ENCODE measurements at regions of chr12 and their contacts with region 1.

Region 1: DNA sequence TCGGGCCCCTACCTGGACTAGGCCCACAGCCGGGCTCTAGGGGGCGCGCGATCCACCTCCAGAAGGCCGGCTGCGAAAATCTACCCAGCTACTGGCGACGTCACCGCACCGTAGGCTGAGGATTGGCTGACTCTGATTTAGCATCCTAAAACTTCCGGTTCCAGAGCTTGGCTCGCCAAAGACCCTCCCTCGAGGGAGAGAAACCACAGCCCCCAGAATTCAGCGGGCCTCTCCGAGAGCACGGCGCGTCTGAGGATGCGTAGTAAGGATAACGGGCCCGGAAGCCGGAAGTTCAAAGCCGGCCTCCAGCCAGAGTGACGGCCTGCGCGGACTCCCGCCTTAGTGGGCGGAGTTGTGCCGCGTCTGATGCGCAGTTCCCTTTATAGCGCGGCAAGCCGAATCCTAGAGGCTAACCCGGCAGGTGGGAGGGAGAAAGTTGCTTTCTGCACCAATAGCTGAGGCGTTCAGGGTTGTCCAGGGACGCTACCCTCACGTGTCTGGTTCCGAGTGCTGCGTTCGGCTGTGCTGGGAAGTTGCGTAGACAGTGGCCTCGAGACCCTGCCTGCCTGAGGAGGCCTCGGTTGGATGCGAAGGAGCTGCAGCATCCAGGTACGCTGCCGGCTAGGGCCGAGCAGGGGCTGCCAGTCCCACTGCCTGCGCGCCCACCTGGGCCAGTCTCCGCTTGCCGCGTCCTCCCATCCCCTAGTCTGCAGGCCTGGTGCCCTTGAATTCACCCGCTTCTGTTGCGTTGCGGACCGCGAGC is at the start of gene COX14:
- DNase-seq: peak; percentile 98 to 99
- ATAC-seq: peak; percentile 88 to 95 (median 92)
- H3K4me3 ChIP-seq: peak within 1 kb of the TSS; percentile 70 to 100 (median 96)
- H3K27ac ChIP-seq: peak within 1 kb of the TSS; percentile 83 to 98 (median 96)
- H3K4me1 ChIP-seq: peaks cover 16 to 68% (median 53%) of the 10 kb centered on the region in 9 donors
- H3K27me3 ChIP-seq: no peaks in the 10 kb centered on the region
- CTCF ChIP-seq: peak; percentile 84 to 100 (median 92)
- total RNA-seq, gene COX14: 144 to 239 (median 170) TPM

Region 2: GRCh38 chr12:49776413-49776812 is 335.5 kb before region 1 on chr12:
- intact Hi-C with region 1: no loop called
- DNase-seq: peak; percentile 51 to 59
- ATAC-seq: peak; percentile 73 to 94 (median 88)
- H3K4me3 ChIP-seq: no peak overlapping the region
- H3K27ac ChIP-seq: no peak overlapping the region
- H3K4me1 ChIP-seq: peaks cover 0 to 10% (median 5%) of the 10 kb centered on the region in 9 donors
- H3K27me3 ChIP-seq: no peaks in the 10 kb centered on the region
- CTCF ChIP-seq: peak; percentile 60 to 86 (median 80)

Region 3: DNA sequence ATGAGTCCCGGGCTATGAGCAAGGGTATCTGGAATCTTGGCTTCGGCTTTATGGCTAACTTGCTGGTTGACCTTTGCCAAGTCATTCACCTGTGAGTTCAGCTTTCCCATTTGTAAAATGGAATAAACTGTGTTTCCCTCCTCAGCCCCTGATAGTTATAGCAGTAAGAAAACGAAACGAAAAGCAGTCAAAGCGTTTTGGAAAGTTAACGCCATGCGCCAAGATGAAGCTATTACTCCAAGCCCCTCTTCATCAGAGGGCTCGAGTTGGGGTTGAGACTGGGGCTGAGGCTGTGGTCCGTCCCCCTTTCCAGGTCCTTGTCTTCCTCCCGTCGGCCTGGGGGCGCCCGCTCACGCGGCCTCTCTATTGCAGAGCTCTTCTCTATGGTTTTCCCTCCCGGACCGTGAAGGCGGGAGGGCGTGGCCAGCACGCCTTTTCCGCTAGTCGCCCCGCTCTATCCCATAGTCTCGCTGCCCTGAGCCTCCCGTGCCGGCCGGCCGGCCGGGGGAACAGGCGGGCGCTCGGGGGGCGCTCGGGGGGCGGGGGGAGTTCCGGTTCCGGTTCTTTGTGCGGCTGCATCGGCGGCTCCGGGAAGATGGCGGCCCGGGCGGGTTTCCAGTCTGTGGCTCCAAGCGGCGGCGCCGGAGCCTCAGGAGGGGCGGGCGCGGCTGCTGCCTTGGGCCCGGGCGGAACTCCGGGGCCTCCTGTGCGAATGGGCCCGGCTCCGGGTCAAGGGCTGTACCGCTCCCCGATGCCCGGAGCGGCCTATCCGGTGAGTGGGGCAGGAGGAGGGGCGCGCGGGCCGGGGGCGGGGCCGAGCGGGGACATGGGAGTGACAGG is 26.9 kb before region 1 on chr12 and contains the start of gene SMARCD1:
- intact Hi-C with region 1: loop called in 2 of 10 experiments (anchors 2 kb)
- DNase-seq: peak; percentile 93
- ATAC-seq: peak; percentile 95 to 98 (median 96)
- H3K4me3 ChIP-seq: peak within 1 kb of the TSS; percentile 73 to 99 (median 90)
- H3K27ac ChIP-seq: peak within 1 kb of the TSS; percentile 95 to 100 (median 98)
- H3K4me1 ChIP-seq: peaks cover 0 to 34% (median 13%) of the 10 kb centered on the region in 9 donors
- H3K27me3 ChIP-seq: no peaks in the 10 kb centered on the region
- CTCF ChIP-seq: peak in 8 of 9 donors; percentile 12 to 78 (median 59)
- total RNA-seq, gene SMARCD1: 13.3 to 24.0 (median 17.4) TPM

Region 4: DNA sequence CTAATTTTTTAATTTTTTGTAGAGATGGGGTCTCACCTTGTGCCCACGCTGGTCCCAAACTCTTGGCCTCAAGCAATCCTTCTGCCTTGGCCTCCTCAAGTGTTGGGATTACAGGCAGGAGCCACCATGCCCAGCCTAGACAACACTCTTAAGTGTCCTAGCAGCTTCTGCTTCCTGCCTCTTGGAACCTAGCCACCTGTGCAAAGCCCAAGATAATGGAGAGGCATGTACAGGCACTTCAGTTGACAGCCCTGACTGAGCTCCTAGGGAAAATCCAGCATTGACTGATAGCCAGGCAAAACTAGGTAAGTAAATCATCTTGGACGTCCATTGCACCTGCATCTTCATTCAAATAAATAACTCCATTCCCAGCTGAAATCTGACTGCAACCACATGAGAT is 15.7 kb after region 1 on chr12:
- intact Hi-C with region 1: no loop called
- DNase-seq: no peak
- ATAC-seq: peak in 5 of 8 donors; percentile 41 to 78 (median 69)
- H3K4me3 ChIP-seq: no peak overlapping the region
- H3K27ac ChIP-seq: no peak overlapping the region
- H3K4me1 ChIP-seq: peaks cover 0 to 45% (median 15%) of the 10 kb centered on the region in 9 donors
- H3K27me3 ChIP-seq: no peaks in the 10 kb centered on the region
- CTCF ChIP-seq: no peak

Region 5: DNA sequence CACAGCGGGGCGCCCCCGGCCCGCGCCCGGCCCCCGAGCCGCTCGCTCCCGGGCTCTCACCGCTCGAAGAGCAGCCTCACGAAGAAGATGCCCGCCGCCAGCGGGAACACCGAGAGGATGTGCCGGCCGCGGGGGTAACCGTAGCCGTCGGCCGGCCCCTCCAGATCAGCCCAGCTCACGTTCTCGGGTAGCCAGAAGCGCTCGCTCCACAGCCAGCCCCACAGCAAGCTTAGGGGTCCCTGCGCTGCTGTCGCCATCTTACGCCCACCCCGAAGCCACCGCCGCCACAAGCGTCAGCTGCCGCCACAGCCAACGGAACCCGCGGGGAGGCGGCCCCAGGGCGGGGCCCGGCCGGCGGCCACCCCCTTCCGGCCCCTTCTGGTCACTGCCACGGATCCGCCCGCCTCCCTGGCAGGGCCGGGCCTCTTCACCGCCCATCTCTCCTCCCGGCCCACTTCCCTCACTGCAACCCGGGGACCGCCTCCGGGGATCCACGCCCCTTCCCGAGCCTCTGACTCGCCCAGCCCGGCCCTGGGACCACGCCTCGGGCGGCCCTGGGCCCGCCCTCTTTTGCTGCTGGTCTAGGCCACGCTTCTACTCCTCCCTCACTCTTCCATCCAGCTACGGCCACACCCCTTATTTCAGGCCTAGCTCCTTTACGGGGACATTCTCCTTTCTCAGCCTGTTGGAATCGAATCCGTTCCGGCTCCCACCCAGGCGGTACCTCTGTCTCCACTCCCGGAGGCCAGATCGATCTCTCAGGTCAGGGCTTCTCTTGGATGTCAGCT is 55.4 kb after region 1 on chr12 and contains the start of gene CERS5:
- intact Hi-C with region 1: loop called in 6 of 10 experiments (anchors 2 to 10 kb)
- DNase-seq: peak; percentile 98 to 99
- ATAC-seq: peak; percentile 98 to 100 (median 99)
- H3K4me3 ChIP-seq: peak within 1 kb of the TSS; percentile 57 to 100 (median 94)
- H3K27ac ChIP-seq: peak within 1 kb of the TSS; percentile 60 to 99 (median 94)
- H3K4me1 ChIP-seq: peaks cover 6 to 27% (median 13%) of the 10 kb centered on the region in 9 donors
- H3K27me3 ChIP-seq: no peaks in the 10 kb centered on the region
- CTCF ChIP-seq: peak in 7 of 9 donors; percentile 21 to 51 (median 41)
- total RNA-seq, gene CERS5: 8.3 to 15.6 (median 11.4) TPM

Region 6: DNA sequence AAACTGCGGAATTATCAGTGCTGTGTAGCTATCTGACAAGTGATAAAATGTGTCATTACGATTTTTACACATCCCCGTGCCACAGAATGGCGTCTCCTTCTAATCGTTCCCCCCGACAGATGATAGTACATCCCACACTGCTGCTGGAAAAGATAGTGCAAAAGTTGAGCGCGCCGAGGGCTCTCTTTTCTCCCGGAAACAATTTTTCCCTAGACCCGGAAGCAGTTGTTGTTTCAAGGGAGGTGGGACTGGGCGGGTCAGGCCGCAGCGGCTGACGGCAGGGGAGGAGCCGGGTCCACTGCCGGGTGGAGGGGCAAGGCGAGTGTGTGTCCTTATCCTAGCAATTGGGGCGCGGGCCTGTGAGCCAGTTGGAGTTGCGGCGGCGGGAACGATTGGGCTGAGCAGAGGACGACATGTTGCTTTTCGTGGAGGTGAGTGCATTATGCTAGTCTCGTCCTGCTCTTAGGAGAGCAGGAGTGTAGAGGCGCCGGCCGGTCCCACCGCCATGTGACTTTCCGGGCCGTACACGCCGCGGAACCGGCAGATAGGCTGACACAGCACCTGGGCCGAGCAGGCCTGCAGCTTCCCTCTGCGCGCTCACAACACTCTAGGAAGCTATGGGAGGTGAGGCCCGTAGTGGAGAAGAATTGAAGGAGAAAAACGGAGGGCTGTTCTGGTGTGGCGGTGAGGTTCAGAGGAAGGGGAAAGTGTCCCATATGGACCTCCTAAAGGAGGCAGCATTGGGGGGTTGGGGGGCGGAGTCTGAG is 288.9 kb after region 1 on chr12 and contains the start of gene LARP4:
- intact Hi-C with region 1: loop called in 1 of 10 experiments (anchors 5 kb)
- DNase-seq: peak; percentile 90 to 95
- ATAC-seq: peak; percentile 97 to 99 (median 98)
- H3K4me3 ChIP-seq: peak within 1 kb of the TSS; percentile 43 to 95 (median 76)
- H3K27ac ChIP-seq: peak within 1 kb of the TSS; percentile 52 to 96 (median 90)
- H3K4me1 ChIP-seq: peaks cover 0 to 30% (median 23%) of the 10 kb centered on the region in 9 donors
- H3K27me3 ChIP-seq: no peaks in the 10 kb centered on the region
- CTCF ChIP-seq: peak in 1 of 9 donors; percentile 10
- total RNA-seq, gene LARP4: 45.0 to 75.7 (median 62.5) TPM